Activated T-helper 2 cell treated with anti-CD3 and anti-CD28 coated beads, Interferon-gamma antibody, Interleukin-2, Interleukin-4, amounts not matched to agents 10 μg/mL and 5 μg/mL and 100 μg/mL, durations not matched to agents 14 hours and 24 hours and 36 hours (primary cell): ENCODE measurements at regions of chr22 and their contacts with region 1.

Region 1: DNA sequence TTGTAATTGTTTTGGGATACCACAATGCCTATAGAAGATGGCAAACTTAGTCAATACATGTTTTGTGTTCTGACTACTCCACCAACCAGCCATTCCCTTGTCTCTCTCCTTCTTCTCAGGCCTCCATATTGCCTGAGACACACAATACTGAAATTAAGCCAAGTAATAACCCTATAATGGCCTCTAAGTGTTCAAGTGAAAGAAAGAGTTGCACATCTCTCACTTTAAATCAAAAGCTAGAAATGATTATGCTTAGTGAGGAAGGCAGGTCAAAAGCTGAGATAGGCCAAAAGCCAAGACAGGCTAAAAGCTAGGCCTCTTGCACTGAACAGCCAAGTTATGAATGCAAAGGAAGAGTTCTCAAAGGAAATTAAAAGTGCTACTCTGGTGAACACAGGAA is 318.7 kb downstream of the TTC28 start:
- DNase-seq: no peak
- H3K4me3 Mint-ChIP-seq: no peak overlapping the region
- H3K27ac Mint-ChIP-seq: peak overlapping the region; percentile 64
- H3K4me1 Mint-ChIP-seq: peaks cover 19% of the 10 kb centered on the region
- H3K27me3 Mint-ChIP-seq: no peaks in the 10 kb centered on the region

Region 2: DNA sequence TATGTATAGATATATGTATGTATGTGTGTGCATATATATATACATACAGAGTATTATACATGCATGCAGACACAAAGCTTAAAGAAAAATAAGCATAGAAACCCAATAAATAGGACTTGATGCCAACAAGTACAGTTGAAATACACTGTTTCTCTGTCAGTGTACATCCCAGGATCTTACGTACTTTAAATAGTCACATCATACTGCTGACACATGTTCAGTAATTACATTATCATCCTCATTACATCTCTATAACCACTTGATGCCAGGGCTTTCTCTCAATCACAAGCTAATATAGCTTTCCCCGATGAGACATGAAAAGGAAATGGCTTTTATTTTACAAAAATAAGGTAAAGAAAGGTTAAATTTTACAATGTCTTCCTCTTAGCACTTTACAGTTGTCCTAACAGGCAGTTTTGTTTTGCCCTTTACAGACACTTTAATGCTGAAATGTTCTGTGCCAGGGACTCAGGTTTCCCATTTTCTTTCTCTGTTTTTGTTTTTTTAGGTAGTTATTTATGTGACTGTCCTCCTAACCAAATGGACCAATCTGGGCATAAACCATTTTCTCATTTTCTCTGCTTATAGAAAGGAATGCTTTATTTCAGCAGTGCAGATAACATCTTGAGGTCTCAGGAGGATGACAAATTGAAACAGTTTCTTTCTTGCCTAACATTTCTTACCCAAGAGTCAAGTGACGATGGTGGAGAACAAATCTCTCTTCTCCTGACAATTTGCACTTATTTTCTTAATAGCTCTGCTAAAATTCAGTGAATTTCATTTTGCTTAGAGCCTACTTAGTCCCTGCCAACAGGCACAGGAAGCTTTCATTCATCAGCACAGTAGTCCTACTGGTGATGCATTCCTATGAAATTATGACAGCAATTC is 31.5 kb before region 1 on chr22:
- intact Hi-C with region 1: loop called (anchors 1 kb)
- DNase-seq: no peak
- H3K4me3 Mint-ChIP-seq: no peak overlapping the region
- H3K27ac Mint-ChIP-seq: no peak overlapping the region
- H3K4me1 Mint-ChIP-seq: peaks cover 15% of the 10 kb centered on the region
- H3K27me3 Mint-ChIP-seq: peaks cover 11% of the 10 kb centered on the region

Region 3: GRCh38 chr22:28379075-28379779 is 18.3 kb after region 1 on chr22:
- intact Hi-C with region 1: loop called (anchors 1 kb)
- DNase-seq: no peak
- H3K4me3 Mint-ChIP-seq: no peak overlapping the region
- H3K27ac Mint-ChIP-seq: peak overlapping the region; percentile 33
- H3K4me1 Mint-ChIP-seq: peaks cover 20% of the 10 kb centered on the region
- H3K27me3 Mint-ChIP-seq: no peaks in the 10 kb centered on the region

Region 4: DNA sequence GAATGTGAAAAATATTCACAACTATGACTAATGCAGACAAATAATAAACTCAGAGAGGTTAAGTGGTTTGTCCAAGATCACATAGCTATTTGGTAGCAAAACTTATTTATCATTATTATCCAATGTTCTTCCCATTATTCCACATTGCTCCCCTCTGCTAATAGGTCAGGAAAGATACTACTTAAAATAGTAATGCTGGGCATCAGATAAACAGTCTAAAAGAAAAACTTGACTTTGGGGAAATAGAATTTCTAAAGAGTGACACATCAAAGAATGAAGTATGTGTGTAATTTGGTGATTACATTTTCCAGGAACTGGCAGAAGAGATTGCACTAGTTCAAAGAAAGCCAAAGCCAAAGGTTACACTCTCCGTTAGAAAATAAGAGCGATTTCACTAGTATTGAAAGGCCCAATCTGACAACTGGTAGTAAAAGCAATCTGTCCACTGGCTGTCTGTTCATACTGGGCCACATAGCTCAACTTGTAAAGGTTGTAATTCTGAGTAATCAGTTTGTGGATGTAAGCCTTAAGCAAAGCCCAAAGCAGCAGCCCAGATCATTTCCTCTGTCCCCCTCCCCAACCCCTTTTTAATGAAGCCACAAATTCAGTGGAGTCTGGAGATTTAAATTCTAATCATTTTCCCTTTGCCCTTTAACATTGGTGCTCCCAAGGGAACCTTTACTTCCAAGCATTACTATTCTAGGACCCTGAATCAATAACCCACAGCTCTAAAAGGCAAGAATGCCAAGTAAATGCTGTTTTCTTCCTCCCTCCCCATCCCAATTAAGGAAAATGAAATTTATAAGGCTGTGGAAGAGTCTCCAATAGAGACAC is 35.2 kb after region 1 on chr22:
- intact Hi-C with region 1: loop called (anchors 2 kb)
- DNase-seq: no peak
- H3K4me3 Mint-ChIP-seq: peak overlapping the region; percentile 14
- H3K27ac Mint-ChIP-seq: peak overlapping the region; percentile 62
- H3K4me1 Mint-ChIP-seq: peaks cover 51% of the 10 kb centered on the region
- H3K27me3 Mint-ChIP-seq: no peaks in the 10 kb centered on the region